ENCODE measurements at regions of chr6 and their contacts with region 1.

Region 1: GRCh38 chr6:37102279-37103168 is 67.4 kb upstream of the PIM1 start:
- DNase-seq: peak; percentile 77 to 87
- H3K4me3 ChIP-seq: peak overlapping the region; percentile 43; the same call in 1 of the 2 replicates
- H3K27ac ChIP-seq: peak overlapping the region; percentile 97
- H3K4me1 ChIP-seq: peaks cover 55% of the 10 kb centered on the region
- H3K27me3 ChIP-seq: no peaks in the 10 kb centered on the region
- CTCF ChIP-seq: no peak

Region 2: DNA sequence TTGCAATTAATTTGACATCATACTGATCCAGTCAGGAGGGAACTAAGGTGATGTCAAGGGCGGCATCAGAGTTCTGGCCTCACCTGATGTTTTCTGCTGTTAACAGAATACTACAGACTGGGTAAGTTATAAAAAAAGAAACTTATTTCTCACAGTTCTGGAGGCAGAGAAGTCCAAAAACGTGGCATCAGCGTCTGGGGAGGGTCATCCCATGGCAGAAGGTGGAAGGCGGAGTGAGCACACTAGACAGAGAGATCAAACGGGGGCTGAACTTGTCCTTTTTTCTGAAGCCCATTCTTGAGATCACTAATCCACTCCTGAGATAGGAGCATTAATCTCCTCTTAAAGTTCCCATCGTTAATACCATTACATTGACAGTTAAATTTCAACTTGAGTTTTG is 113.3 kb before region 1 on chr6:
- CTCF ChIA-PET with region 1: no interaction called
- POLR2A ChIA-PET with region 1: no interaction called
- intact Hi-C with region 1: no loop called
- DNase-seq: no peak
- H3K4me3 ChIP-seq: no peak overlapping the region
- H3K27ac ChIP-seq: no peak overlapping the region
- H3K4me1 ChIP-seq: peaks cover 11% of the 10 kb centered on the region
- H3K27me3 ChIP-seq: no peaks in the 10 kb centered on the region
- CTCF ChIP-seq: no peak

Region 3: DNA sequence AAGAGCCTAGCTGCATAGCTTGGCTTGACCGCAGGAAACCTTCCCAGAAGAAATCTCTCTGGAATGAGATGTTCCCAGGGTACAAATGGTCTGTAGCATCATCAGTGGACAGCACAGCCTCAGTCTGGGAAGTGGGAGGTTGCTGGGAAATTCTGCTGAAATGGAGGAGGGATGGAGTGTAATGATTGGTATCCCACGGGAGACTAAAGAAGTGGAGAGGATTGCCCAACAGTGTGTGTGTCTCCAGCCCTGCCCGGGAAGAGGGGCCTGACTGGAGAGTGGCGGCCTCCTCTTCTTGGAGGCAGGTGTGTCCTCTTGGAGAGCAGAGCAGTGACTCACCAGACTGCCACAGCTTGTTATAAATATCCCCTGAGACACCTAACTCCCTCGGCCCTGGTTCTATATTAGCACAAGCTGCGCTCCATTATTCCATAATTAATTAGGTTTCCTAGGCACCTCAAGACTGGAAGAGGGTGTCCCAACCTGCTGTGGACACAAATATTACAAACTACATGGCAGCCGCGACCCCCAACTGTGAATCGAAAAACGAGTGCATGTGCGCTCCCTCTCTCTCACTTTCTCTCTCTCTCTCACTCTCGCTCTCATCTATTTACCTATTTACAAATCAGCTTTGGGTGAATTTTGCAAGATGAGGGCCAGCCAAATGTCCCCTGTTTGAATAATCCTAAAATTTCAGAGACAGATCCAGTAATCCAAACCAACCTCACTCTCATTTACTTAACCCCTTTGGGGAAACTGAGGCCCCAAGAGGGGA is 28.3 kb before region 1 on chr6:
- CTCF ChIA-PET with region 1: no interaction called
- POLR2A ChIA-PET with region 1: interaction called, 3 read pairs
- intact Hi-C with region 1: loop called (anchors 1 kb)
- DNase-seq: peak; percentile 44 to 51
- H3K4me3 ChIP-seq: no peak overlapping the region
- H3K27ac ChIP-seq: no peak overlapping the region
- H3K4me1 ChIP-seq: peaks cover 44% of the 10 kb centered on the region
- H3K27me3 ChIP-seq: no peaks in the 10 kb centered on the region
- CTCF ChIP-seq: no peak

Region 4: GRCh38 chr6:37125783-37126492 is 23.4 kb after region 1 on chr6:
- CTCF ChIA-PET with region 1: interaction called, 7 read pairs
- POLR2A ChIA-PET with region 1: no interaction called
- intact Hi-C with region 1: loop called (anchors 1 kb)
- DNase-seq: peak; percentile 28 to 71
- H3K4me3 ChIP-seq: peak overlapping the region; percentile 23; the same call in 1 of the 2 replicates
- H3K27ac ChIP-seq: peak overlapping the region; percentile 95
- H3K4me1 ChIP-seq: peaks cover 60% of the 10 kb centered on the region
- H3K27me3 ChIP-seq: no peaks in the 10 kb centered on the region
- CTCF ChIP-seq: no peak

Region 5: DNA sequence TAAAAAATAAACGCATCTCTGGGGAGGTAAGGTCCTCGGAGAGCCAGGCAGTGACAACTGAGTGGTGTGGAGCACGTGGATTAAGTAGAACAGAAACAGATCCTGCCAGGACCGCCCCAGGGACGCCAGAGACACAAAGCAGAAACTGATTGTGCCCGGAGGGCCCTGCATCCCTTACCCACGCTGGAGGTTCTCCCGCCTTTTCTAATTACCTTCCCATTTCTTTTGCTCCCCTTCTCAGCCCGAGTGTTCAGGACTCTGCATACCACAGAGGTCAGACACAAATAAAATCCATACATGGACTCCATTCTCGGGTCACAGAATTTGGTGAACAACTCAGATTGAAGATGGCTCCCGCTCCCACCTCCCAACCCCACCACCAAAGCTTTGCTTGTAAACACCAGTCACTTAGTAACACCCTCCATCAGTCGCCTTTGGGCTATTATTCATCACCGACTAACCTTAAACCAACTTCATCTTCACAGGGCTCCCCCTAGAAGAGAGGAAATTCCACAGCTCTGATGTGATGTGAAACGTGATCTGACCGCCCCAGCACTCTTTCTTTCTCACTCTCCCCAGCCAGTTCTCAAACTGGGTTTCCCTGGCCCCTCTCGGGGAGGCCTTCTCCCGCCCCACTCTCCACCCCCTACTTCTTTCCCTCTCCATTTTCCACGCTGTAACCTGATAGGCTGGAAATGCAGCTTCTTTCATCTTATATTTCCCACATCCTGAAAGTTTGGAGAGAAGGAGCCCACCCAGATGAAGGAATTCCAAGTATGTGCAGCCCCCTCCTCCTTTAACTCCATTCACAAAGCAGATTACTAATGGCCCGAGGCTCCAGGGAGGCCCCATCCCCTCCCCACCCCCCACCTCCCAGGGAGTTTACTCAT is 34.9 kb after region 1 on chr6:
- CTCF ChIA-PET with region 1: interaction called, 3 read pairs
- POLR2A ChIA-PET with region 1: interaction called, 6 read pairs
- intact Hi-C with region 1: loop called (anchors 1 kb)
- DNase-seq: peak; percentile 81 to 98
- H3K4me3 ChIP-seq: peak overlapping the region; percentile 56
- H3K27ac ChIP-seq: peak overlapping the region; percentile 98
- H3K4me1 ChIP-seq: peaks cover 88% of the 10 kb centered on the region
- H3K27me3 ChIP-seq: no peaks in the 10 kb centered on the region
- CTCF ChIP-seq: no peak